ENCODE measurements at regions of chr11 and their contacts with region 1.

Region 1: GRCh38 chr11:6737872-6738466 is 33.8 kb downstream of the OR2AG2 start:
- DNase-seq: peak; percentile 65 to 84 (median 81)
- H3K4me3 ChIP-seq: no peak overlapping the region
- H3K27ac ChIP-seq: no peak overlapping the region
- H3K4me1 ChIP-seq: peaks cover 7 to 29% (median 22%) of the 10 kb centered on the region in 4 experiments
- H3K27me3 ChIP-seq: no peaks in the 10 kb centered on the region

Region 2: GRCh38 chr11:6556139-6556949 is 181.6 kb before region 1 on chr11:
- CTCF ChIA-PET with region 1: no interaction called
- POLR2A ChIA-PET with region 1: no interaction called
- DNase-seq: no peak
- H3K4me3 ChIP-seq: no peak overlapping the region
- H3K27ac ChIP-seq: no peak overlapping the region
- H3K4me1 ChIP-seq: no peaks in the 10 kb centered on the region
- H3K27me3 ChIP-seq: no peaks in the 10 kb centered on the region

Region 3: DNA sequence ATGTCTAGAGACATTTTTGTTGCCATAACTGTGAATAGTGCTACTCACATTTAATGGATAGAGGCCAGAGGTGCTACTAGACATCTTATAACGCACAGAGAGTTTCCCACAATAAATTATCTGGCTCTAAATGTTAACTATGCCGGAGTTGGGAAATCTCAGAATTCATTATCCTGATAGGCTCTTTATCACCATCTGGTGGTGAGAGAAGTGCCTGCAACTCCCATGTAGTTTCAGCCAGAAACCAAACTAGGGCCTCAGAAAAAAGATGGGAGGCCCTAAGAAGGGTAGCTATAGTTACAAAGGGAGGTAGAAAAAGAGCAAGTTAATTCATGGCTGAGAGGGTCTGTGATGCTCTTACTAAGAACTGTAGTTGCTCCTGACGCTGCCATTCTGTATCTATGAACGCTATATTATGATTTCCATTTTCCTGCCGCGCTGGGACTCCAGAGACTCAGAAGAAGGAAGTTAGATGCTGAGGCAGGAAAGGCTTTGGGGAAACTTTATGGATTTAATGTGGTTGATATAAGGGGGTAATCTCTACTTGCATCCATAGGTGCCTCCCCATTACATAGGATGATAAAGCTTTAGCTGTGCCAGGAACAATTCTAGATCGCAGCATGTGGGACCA is 31.9 kb before region 1 on chr11:
- CTCF ChIA-PET with region 1: interaction called, 39 read pairs
- POLR2A ChIA-PET with region 1: no interaction called
- DNase-seq: peak; percentile 43 to 68 (median 57)
- H3K4me3 ChIP-seq: no peak overlapping the region
- H3K27ac ChIP-seq: no peak overlapping the region
- H3K4me1 ChIP-seq: peaks cover 0 to 2% (median 0%) of the 10 kb centered on the region in 4 experiments
- H3K27me3 ChIP-seq: no peaks in the 10 kb centered on the region

Region 4: DNA sequence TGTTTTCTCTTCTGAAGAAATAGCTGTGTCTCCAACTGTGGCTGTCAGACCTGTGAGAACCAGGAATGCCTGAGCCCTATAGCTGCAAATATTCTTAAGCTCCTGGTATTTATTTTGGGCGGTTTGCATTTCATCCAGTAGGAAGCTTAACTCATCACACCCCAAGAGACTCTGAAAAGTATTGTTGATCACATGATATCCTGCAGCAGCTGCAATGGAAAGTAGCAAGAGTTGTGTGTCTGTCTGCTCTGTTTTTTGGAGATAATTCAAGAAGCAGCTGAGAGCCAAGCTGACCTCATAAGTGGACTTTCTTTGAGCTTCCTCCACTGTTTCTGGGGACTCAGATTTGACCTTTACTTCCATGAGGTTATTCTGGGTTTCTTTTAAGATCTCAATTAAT is 18.4 kb before region 1 on chr11:
- CTCF ChIA-PET with region 1: interaction called, 22 read pairs
- POLR2A ChIA-PET with region 1: no interaction called
- DNase-seq: no peak
- H3K4me3 ChIP-seq: no peak overlapping the region
- H3K27ac ChIP-seq: no peak overlapping the region
- H3K4me1 ChIP-seq: no peaks in the 10 kb centered on the region
- H3K27me3 ChIP-seq: no peaks in the 10 kb centered on the region